Transverse colon (tissue), 4 donors: ENCODE measurements at regions of chr11 and their contacts with region 1.

Region 1: DNA sequence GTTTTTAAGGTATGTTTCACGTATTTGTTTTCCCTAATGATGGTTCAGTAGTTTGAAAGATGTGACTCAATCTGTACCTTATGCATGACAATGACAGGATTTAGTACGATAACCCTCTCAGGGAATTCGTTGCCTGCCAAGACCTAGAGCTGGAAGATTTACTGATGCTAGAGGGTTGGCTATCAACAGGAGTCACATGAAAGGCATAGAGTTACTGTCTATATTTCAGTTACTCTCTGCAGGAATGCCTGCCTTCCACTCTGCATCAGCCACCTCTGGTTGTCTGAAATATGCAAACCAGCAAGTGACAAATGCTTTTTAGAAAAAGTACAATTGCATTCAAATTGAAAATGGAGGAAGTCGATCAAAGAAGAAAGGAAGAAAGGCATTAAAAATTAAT is 276.3 kb upstream of the RAG2 start:
- DNase-seq: no peak
- H3K4me3 ChIP-seq: no peak overlapping the region
- H3K27ac ChIP-seq: no peak overlapping the region
- H3K4me1 ChIP-seq: no peaks in the 10 kb centered on the region
- H3K27me3 ChIP-seq: no peaks in the 10 kb centered on the region
- CTCF ChIP-seq: no peak
- EP300 ChIP-seq: no peak
- POLR2A ChIP-seq: no peak

Region 2: GRCh38 chr11:36930256-36930655 is 56.0 kb after region 1 on chr11:
- in situ Hi-C with region 1: loop called in 1 of 4 experiments (anchors 10 kb)
- intact Hi-C with region 1: no loop called
- DNase-seq: no peak
- H3K4me3 ChIP-seq: no peak overlapping the region
- H3K27ac ChIP-seq: no peak overlapping the region
- H3K4me1 ChIP-seq: no peaks in the 10 kb centered on the region
- H3K27me3 ChIP-seq: no peaks in the 10 kb centered on the region
- CTCF ChIP-seq: no peak
- EP300 ChIP-seq: no peak
- POLR2A ChIP-seq: no peak